Naive thymus-derived CD4-positive, alpha-beta T cell (primary cell): ENCODE measurements at regions of chr10 and their contacts with region 1.

Region 1: DNA sequence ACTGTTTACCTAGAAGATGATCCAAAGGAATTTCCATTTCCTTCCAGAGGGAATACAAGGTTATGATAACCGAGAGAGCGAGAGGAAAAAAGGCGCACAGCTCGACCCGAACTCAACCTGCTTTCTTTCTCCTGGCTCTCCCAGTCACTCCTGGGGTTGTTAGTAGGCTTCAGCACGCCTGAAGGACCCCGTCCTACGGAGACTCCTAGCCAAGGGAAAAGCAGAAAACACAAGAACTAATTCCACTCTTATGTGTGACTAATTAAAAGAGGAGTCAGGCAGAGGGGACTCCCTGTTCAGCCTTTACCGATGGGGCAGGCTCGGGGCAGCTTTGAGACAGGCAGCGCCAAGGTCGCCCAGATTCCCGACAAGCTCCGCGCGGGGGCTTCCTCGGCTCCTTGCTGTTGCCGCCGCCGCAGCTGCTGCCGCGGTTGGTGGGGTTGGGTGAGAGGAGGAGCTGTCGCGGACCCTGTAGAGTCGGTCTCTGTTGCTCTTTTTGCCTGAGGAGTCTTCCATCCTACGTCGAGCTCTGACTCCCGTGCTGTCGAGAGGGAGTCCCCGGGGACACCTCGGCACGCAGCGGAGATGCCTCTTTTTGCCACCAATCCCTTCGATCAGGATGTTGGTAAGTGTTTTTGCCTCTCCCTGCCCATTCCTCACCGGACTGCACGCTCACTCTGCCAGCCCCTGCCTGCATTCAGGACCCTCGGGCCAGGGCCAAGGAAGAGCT is at the start of gene STAM:
- DNase-seq: peak; percentile 88 to 99 (median 94)
- ATAC-seq: peak; percentile 95
- H3K4me3 ChIP-seq: peak within 1 kb of the TSS; percentile 92
- H3K4me3 Mint-ChIP-seq: peak within 1 kb of the TSS; percentile 95 to 99 (median 98)
- H3K27ac ChIP-seq: peak within 1 kb of the TSS; percentile 96
- H3K27ac Mint-ChIP-seq: peak within 1 kb of the TSS; percentile 100
- H3K4me1 ChIP-seq: peaks cover 17 to 35% of the 10 kb centered on the region in 2 donors
- H3K4me1 Mint-ChIP-seq: peaks cover 33 to 71% (median 57%) of the 10 kb centered on the region in 7 donors
- H3K27me3 ChIP-seq: no peaks in the 10 kb centered on the region
- H3K27me3 Mint-ChIP-seq: peaks cover 0 to 3% (median 0%) of the 10 kb centered on the region in 5 donors
- total RNA-seq, gene STAM: 18.3 to 25.4 (median 19.6) TPM

Region 2: DNA sequence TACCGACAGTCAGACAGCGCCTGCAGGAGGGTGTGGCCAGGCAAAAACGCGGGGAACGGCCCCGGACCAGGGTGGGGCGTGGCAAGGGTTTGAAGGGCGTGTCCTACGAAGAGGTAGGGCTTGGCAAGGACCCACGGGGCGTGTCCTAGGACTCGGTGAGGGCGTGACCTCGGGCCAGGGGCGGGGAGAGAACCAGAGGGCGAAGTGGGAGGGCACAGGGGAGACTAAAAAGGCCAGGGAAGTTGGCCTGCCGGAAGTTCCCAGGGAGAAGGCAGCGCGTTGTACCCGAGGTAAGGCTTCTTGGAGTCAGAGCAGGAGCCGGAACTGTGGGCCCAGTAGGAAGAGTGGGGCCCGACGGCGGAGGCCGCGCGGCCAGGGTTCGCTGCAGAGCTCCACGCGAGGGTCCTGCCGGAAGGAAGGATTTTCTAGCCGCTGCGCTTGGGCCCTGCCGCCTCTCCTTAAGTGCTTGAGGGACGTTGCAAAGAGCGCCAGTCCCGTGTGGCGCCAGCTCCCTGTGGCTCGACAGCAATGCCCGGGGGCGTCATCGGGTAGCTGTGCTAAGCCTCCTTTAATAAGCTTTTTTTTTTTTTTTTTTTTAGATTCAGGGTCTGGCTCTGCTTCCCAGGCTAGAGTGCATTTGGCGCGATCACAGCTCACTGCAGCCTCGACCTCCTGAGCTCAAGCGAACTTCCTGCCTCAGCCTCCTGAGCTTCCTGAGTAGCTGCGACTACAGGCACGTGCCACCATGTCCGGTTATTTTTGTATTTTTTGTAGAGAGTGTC is 1207.0 kb before region 1 on chr10 and contains the start of gene PTER:
- CTCF ChIA-PET with region 1: no interaction called
- POLR2A ChIA-PET with region 1: interaction called, 4 read pairs
- intact Hi-C with region 1: loop called in 1 of 2 experiments (anchors 1 kb)
- DNase-seq: peak; percentile 92 to 99 (median 94)
- ATAC-seq: peak; percentile 100
- H3K4me3 ChIP-seq: peak within 1 kb of the TSS; percentile 93
- H3K4me3 Mint-ChIP-seq: peak within 1 kb of the TSS; percentile 91 to 99 (median 96)
- H3K27ac ChIP-seq: peak within 1 kb of the TSS; percentile 77
- H3K27ac Mint-ChIP-seq: peak within 1 kb of the TSS; percentile 87 to 97 (median 94)
- H3K4me1 ChIP-seq: peaks cover 13 to 28% of the 10 kb centered on the region in 2 donors
- H3K4me1 Mint-ChIP-seq: peaks cover 36 to 57% (median 48%) of the 10 kb centered on the region in 7 donors
- H3K27me3 ChIP-seq: no peaks in the 10 kb centered on the region
- H3K27me3 Mint-ChIP-seq: peaks cover 0 to 19% (median 0%) of the 10 kb centered on the region in 5 donors
- total RNA-seq, gene PTER: 12.9 to 23.7 (median 15.3) TPM

Region 3: DNA sequence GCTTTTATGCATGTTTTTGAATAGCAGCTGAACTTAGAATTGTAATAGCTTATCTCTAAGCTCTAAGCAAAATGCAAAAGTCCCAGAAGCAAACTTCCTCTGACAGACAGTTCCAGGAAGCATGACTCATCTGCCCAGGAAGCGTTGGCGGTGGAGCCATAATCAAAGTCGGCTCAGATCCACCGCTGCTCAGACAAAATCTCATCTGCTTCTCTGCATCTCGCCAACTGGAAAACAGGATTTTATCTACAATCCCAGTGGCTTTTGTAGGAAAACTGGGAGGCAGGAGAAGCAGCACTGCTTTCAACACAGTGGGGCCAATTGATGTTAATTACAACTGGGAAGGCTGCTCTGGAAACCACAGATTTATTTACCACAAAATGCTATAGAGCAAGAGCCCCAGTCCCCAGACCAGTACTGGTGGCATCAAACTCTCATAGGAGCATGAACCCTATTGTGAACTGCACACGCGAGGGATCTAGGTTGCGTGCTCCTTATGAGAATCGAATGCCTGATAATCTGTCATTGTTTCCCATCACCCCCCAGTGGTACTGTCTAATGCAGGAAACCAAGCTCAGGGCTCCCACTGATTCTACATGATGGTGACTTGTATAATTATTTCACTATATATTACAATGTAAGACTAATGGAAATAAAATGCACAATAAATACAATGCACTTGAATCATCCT is 614.2 kb before region 1 on chr10:
- CTCF ChIA-PET with region 1: no interaction called
- POLR2A ChIA-PET with region 1: no interaction called
- intact Hi-C with region 1: loop called (anchors 5 to 10 kb)
- DNase-seq: peak; percentile 31 to 82 (median 50)
- ATAC-seq: peak; percentile 69
- H3K4me3 ChIP-seq: peak overlapping the region; percentile 46
- H3K4me3 Mint-ChIP-seq: peak overlapping the region; percentile 64 to 87 (median 83)
- H3K27ac ChIP-seq: peak overlapping the region; percentile 70
- H3K27ac Mint-ChIP-seq: peak overlapping the region; percentile 75 to 97 (median 93)
- H3K4me1 ChIP-seq: peaks cover 52 to 53% of the 10 kb centered on the region in 2 donors
- H3K4me1 Mint-ChIP-seq: peaks cover 33 to 88% (median 81%) of the 10 kb centered on the region in 7 donors
- H3K27me3 ChIP-seq: no peaks in the 10 kb centered on the region
- H3K27me3 Mint-ChIP-seq: peaks cover 0 to 7% (median 0%) of the 10 kb centered on the region in 5 donors

Region 4: DNA sequence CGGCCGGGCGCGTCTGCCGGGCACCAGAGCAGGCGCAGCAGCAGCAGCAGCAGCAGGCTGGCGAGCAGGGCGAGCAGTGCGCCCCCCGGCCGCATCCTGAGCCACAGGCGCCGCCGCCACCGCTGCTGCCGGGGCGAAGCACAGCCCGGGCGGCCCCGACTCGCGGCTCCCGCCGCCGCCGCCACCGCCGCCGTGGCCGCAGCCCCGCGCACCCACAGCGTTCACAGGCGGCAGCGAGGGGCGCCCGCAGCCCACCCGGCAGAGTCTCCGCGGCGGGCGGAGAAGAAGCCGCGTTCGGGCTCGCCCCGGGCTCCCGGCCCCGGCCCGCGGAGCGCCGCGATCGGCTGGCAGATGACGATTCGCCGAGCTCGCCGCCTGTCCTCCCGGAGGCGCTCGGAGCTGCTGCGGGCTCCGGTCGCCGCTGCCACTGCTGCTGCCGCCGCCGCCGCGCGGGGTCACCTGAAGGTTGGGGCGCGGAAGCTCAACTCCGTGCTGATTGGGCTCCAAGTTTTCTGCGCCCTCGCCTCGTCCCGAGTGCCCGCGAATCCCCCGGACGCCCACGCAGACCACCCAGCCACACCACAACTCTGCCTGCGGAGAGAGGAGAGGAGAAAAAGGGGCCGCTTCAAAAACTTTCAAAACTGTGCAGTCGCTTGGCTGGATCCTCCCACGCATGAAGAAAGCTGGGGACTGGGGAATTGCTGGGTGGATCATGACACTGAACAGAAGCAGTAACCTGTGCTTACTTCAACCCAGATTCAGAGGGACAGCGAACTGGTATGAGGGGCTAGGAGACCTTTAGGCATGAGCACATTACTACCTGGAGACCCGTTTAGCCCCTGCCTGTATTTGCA is 189.5 kb before region 1 on chr10 and contains the start of gene ST8SIA6:
- CTCF ChIA-PET with region 1: no interaction called
- POLR2A ChIA-PET with region 1: interaction called, 3 read pairs
- intact Hi-C with region 1: loop called in 1 of 2 experiments (anchors 10 kb)
- DNase-seq: peak; percentile 26 to 64 (median 52)
- ATAC-seq: peak; percentile 80
- H3K4me3 ChIP-seq: peak within 1 kb of the TSS; percentile 64
- H3K4me3 Mint-ChIP-seq: peak within 1 kb of the TSS; percentile 82 to 92 (median 89)
- H3K27ac ChIP-seq: peak within 1 kb of the TSS; percentile 29
- H3K27ac Mint-ChIP-seq: peak within 1 kb of the TSS in 5 of 9 donors; percentile 18 to 87 (median 74)
- H3K4me1 ChIP-seq: peaks cover 4 to 10% of the 10 kb centered on the region in 2 donors
- H3K4me1 Mint-ChIP-seq: peaks cover 5 to 23% (median 20%) of the 10 kb centered on the region in 7 donors
- H3K27me3 ChIP-seq: no peaks in the 10 kb centered on the region
- H3K27me3 Mint-ChIP-seq: peaks cover 0 to 66% (median 5%) of the 10 kb centered on the region in 5 donors
- total RNA-seq, gene ST8SIA6: 0.43 to 2.5 (median 0.60) TPM

Region 5: GRCh38 chr10:17662193-17663138 is 18.5 kb after region 1 on chr10:
- CTCF ChIA-PET with region 1: no interaction called
- POLR2A ChIA-PET with region 1: interaction called, 3 read pairs
- intact Hi-C with region 1: loop called in 1 of 2 experiments (anchors 2 kb)
- DNase-seq: no peak
- ATAC-seq: peak; percentile 42
- H3K4me3 ChIP-seq: no peak overlapping the region
- H3K4me3 Mint-ChIP-seq: peak overlapping the region in 6 of 10 donors; percentile 8 to 64 (median 40)
- H3K27ac ChIP-seq: no peak overlapping the region
- H3K27ac Mint-ChIP-seq: peak overlapping the region in 6 of 9 donors; percentile 5 to 47 (median 26)
- H3K4me1 ChIP-seq: peaks cover 0 to 8% of the 10 kb centered on the region in 2 donors
- H3K4me1 Mint-ChIP-seq: peaks cover 22 to 72% (median 55%) of the 10 kb centered on the region in 7 donors
- H3K27me3 ChIP-seq: no peaks in the 10 kb centered on the region
- H3K27me3 Mint-ChIP-seq: no peaks in the 10 kb centered on the region

Region 6: DNA sequence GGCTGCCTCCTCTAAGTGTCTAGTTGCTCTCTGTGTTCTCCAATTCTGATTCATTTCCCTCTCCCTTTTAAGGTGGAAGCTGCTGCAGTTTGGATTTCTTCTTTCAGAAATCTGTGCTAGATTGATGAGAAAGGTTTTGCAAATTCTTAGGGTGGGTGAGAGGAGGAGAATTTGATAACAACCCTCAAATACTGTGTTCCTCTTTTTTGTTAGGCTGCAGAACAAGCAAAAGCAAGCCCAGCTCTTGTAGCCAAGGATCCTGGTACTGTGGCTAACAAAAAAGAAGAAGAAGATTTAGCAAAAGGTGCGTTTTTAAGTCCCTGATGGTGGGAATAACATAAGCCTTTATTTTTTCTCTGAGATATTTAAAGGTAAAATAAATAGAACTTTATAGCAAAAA is 49.1 kb after region 1 on chr10:
- CTCF ChIA-PET with region 1: no interaction called
- POLR2A ChIA-PET with region 1: interaction called, 3 read pairs
- intact Hi-C with region 1: loop called in 1 of 2 experiments (anchors 2 kb)
- DNase-seq: no peak
- ATAC-seq: no peak
- H3K4me3 ChIP-seq: no peak overlapping the region
- H3K4me3 Mint-ChIP-seq: no peak overlapping the region
- H3K27ac ChIP-seq: no peak overlapping the region
- H3K27ac Mint-ChIP-seq: no peak overlapping the region
- H3K4me1 ChIP-seq: no peaks in the 10 kb centered on the region
- H3K4me1 Mint-ChIP-seq: peaks cover 0 to 7% (median 3%) of the 10 kb centered on the region in 7 donors
- H3K27me3 ChIP-seq: no peaks in the 10 kb centered on the region
- H3K27me3 Mint-ChIP-seq: no peaks in the 10 kb centered on the region

Region 7: DNA sequence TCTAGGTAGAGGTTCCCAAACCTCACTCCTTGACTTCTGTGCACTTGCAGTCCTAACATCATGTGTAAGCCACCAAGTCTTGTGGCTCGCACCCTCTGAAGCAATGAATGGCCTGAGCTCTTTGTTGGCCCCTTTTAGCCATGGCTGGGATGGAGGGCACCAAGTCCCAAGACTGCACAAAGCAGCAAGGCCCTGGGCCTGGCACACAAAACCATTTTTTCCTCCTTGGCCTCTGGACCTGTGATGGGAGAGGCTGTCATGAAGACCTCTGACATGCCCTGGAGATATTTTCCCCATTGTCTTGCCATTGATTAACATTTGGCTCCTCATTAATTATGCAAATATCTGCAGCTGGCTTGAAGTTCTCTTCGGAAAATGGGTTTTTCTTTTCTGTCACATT is 1344.4 kb after region 1 on chr10:
- CTCF ChIA-PET with region 1: no interaction called
- POLR2A ChIA-PET with region 1: no interaction called
- intact Hi-C with region 1: no loop called
- DNase-seq: no peak
- ATAC-seq: no peak
- H3K4me3 ChIP-seq: no peak overlapping the region
- H3K4me3 Mint-ChIP-seq: no peak overlapping the region
- H3K27ac ChIP-seq: no peak overlapping the region
- H3K27ac Mint-ChIP-seq: no peak overlapping the region
- H3K4me1 ChIP-seq: no peaks in the 10 kb centered on the region
- H3K4me1 Mint-ChIP-seq: peaks cover 0 to 5% (median 0%) of the 10 kb centered on the region in 7 donors
- H3K27me3 ChIP-seq: no peaks in the 10 kb centered on the region
- H3K27me3 Mint-ChIP-seq: no peaks in the 10 kb centered on the region